Spleen (tissue), 13 donors: ENCODE measurements at regions of chr11 and their contacts with region 1.

Region 1: GRCh38 chr11:26297189-26297975 is 34.5 kb upstream of the ANO3 start:
- DNase-seq: no peak
- H3K4me3 ChIP-seq: no peak overlapping the region
- H3K27ac ChIP-seq: no peak overlapping the region
- H3K4me1 ChIP-seq: no peaks in the 10 kb centered on the region
- H3K27me3 ChIP-seq: no peaks in the 10 kb centered on the region
- CTCF ChIP-seq: peak in 10 of 11 experiments; percentile 12 to 46 (median 38)
- POLR2A ChIP-seq: no peak

Region 2: DNA sequence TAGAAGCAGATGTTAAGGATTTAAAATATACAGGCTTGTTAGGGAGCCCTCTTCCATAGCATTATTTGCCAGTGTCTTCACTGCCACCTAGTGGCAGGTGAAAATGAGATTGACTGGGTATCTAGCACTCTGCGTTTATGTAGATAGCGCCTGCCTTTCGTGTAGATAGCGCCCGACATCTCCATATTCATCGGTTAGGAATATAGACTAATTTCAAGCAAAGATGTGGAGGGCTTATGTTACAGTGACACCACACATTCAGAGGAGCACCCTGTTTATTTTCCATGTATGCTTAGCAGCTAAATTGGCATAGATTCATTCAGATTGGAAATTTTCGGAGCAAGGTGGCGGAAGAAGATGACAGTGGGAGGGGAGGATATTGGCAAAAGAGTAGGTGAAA is 352.5 kb after region 1 on chr11:
- intact Hi-C with region 1: no loop called
- DNase-seq: no peak
- H3K4me3 ChIP-seq: no peak overlapping the region
- H3K27ac ChIP-seq: no peak overlapping the region
- H3K4me1 ChIP-seq: no peaks in the 10 kb centered on the region
- H3K27me3 ChIP-seq: no peaks in the 10 kb centered on the region
- CTCF ChIP-seq: peak in 8 of 11 experiments; percentile 21 to 59 (median 44)
- POLR2A ChIP-seq: no peak

Region 3: DNA sequence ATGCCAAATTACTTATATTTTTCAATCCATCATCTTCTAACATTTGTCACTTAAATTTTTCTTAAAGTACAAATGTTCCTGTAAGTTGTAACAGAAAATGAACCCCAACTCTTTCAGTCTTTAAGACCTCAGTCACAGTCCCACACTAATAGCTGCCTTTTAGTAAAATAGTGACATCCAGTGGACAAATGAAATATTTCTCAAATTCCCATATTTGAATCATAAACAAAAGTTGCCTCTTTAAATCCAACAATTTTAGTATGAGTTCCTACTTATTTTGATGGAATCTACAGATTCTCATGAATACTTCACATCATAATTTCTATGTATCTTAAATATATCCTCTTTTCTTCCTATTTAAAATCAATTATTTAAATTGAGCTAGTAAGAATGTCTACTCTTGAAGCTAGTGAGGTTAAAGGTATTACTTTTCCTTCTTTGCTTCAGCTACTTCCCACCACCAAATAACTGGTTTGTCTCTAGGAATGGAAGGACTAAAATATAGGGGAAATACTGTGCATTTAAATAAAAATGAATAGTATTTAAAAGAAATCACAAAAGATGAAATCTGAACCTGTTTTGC is 1200.0 kb after region 1 on chr11:
- intact Hi-C with region 1: loop called (anchors 10 kb)
- DNase-seq: no peak
- H3K4me3 ChIP-seq: no peak overlapping the region
- H3K27ac ChIP-seq: no peak overlapping the region
- H3K4me1 ChIP-seq: peaks cover 0 to 33% (median 27%) of the 10 kb centered on the region in 6 donors
- H3K27me3 ChIP-seq: no peaks in the 10 kb centered on the region
- CTCF ChIP-seq: peak in 7 of 11 experiments; percentile 10 to 51 (median 41)
- POLR2A ChIP-seq: no peak